Heart right ventricle (tissue), 16 donors: ENCODE measurements at regions of chr20 and their contacts with region 1.

Region 1: GRCh38 chr20:20211274-20211987 is 156.5 kb upstream of the INSM1 start:
- DNase-seq: no peak
- ATAC-seq: no peak
- H3K4me3 ChIP-seq: no peak overlapping the region
- H3K27ac ChIP-seq: peak overlapping the region in 7 of 10 donors; percentile 36 to 74 (median 57)
- H3K4me1 ChIP-seq: peaks cover 0 to 47% (median 16%) of the 10 kb centered on the region in 9 donors
- H3K27me3 ChIP-seq: peaks cover 0 to 11% (median 0%) of the 10 kb centered on the region in 7 donors
- CTCF ChIP-seq: no peak

Region 2: GRCh38 chr20:19699180-19699971 is 512.1 kb before region 1 on chr20:
- intact Hi-C with region 1: no loop called
- DNase-seq: no peak
- ATAC-seq: peak in 2 of 8 donors; percentile 49 to 66
- H3K4me3 ChIP-seq: no peak overlapping the region
- H3K27ac ChIP-seq: no peak overlapping the region
- H3K4me1 ChIP-seq: peaks cover 0 to 19% (median 7%) of the 10 kb centered on the region in 9 donors
- H3K27me3 ChIP-seq: no peaks in the 10 kb centered on the region
- CTCF ChIP-seq: no peak

Region 3: DNA sequence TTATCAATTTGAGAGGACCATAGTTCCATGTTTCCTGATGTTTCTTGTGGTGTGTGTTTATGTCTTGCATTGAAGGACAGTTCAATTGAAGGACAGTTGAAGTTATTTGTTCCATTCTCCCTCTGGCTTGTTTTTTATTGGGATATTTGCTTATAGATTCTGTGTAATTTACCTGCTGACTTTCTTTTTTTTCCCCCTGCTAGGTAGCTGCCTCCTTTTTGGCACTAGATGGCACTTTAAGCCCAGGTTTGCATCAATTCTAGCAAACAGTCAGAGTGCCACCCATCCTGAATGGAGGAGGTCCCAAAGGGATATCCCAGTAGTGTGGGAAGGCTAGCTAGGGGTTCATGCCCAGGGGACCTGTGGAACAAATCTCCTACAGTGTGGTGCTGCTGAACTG is 81.0 kb before region 1 on chr20:
- intact Hi-C with region 1: loop called in 1 of 10 experiments (anchors 10 kb)
- DNase-seq: no peak
- ATAC-seq: no peak
- H3K4me3 ChIP-seq: no peak overlapping the region
- H3K27ac ChIP-seq: no peak overlapping the region
- H3K4me1 ChIP-seq: peaks cover 0 to 5% (median 0%) of the 10 kb centered on the region in 9 donors
- H3K27me3 ChIP-seq: no peaks in the 10 kb centered on the region
- CTCF ChIP-seq: peak in 2 of 9 donors; percentile 14 to 16

Region 4: DNA sequence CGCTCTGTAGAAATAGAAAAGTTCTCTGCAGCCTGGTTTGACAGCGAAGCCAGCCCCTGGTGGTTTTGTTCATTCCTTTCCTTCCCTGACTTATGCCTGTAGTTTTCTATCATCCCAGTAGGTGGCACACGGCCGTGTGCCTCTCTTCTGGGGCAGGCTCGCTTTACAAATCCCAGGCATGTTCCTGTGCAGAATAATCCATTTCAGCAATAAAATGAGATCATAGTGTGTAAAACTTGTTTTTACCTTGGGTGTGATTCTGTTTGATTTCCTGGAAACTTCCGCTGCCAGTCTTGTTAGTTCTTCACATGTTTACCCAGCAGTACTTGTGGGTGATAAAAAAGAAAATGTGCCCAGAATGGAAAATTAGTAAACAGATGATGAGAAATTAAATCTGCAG is 149.0 kb after region 1 on chr20:
- intact Hi-C with region 1: no loop called
- DNase-seq: peak in 1 of 2 donors; percentile 26
- ATAC-seq: peak in 7 of 8 donors; percentile 65 to 84 (median 72)
- H3K4me3 ChIP-seq: no peak overlapping the region
- H3K27ac ChIP-seq: no peak overlapping the region
- H3K4me1 ChIP-seq: peaks cover 0 to 22% (median 9%) of the 10 kb centered on the region in 9 donors
- H3K27me3 ChIP-seq: peaks cover 14 to 62% (median 42%) of the 10 kb centered on the region in 7 donors
- CTCF ChIP-seq: peak; percentile 21 to 81 (median 73)